ENCODE measurements at regions of chr19 and their contacts with region 1.

Region 1: DNA sequence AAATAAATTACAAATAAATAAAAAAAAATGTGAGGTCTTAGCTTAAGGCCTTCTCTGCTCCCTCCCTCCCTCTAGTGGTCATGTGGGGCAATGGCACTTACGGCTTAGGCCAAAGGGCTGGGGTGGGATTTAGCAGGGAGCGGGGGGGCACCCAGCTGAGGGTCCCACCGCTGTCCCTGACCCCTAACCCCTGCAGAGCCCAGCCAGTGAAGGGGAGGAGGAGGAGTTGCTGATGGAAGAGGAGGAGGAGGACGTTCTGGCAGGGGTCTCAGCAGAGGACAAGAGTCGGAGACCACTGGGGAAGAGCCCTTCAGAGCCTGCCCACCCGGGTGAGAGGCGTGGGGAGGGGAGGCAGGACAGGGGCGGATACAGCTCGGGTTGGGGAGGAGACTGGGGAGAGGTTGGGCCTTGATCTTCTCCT is 9.3 kb downstream of the MPND start:
- H3K4me3 Mint-ChIP-seq: no peak overlapping the region
- H3K27ac Mint-ChIP-seq: peak overlapping the region; percentile 24
- H3K4me1 Mint-ChIP-seq: peaks cover 5% of the 10 kb centered on the region
- H3K27me3 Mint-ChIP-seq: no peaks in the 10 kb centered on the region

Region 2: DNA sequence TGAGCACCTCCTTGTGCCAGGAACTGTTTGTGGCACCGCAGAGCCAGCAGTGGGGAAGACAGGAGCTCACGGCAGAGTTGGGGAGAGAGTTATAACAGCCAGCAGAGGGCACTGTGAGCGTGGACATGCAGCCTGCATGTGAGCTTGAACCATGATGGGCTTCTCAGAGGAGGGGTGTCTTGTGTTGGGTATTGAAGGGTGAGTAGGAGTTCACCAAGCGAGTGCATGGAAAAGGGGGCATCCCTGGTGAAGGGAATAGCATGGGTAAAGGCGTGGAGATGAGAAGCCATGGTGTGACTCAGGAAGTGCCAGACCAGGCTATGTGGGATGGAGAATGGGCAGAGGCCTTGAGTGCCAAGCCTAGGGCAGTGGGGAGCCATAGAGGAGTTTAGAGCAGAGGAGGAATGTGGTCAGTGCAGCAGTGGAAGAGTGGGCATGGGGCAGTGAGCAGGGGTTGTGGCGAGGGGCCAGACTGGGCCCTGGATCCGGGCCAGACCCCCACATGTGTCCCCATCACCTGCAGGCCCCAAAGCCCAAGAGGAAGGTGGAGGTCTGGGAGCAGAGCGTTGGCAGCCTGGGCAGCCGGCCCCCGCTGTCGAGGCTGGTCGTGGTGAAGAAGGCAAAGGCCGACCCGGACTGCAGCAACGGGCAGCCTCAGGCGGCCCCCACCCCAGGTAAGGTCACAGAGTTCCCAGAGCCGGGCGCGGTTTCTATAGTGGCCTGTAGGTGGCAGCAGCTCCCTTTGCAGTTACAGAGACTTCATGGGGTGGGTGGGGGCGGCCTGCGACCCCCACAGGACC is 85.4 kb before region 1 on chr19:
- intact Hi-C with region 1: loop called (anchors 1 kb)
- H3K4me3 Mint-ChIP-seq: no peak overlapping the region
- H3K27ac Mint-ChIP-seq: peak overlapping the region; percentile 7
- H3K4me1 Mint-ChIP-seq: peaks cover 32% of the 10 kb centered on the region
- H3K27me3 Mint-ChIP-seq: no peaks in the 10 kb centered on the region

Measured in dendritic cell treated with granulocyte-macrophage colony-stimulating factor and Interleukin-4, amounts not matched to agents 40 ng/mL and 50 ng/mL, for 4 days (primary cell).